Activated CD4-positive, alpha-beta T cell treated with anti-CD3 and anti-CD28 coated beads for 36 hours (primary cell): ENCODE measurements at regions of chr15 and their contacts with region 1.

Region 1: DNA sequence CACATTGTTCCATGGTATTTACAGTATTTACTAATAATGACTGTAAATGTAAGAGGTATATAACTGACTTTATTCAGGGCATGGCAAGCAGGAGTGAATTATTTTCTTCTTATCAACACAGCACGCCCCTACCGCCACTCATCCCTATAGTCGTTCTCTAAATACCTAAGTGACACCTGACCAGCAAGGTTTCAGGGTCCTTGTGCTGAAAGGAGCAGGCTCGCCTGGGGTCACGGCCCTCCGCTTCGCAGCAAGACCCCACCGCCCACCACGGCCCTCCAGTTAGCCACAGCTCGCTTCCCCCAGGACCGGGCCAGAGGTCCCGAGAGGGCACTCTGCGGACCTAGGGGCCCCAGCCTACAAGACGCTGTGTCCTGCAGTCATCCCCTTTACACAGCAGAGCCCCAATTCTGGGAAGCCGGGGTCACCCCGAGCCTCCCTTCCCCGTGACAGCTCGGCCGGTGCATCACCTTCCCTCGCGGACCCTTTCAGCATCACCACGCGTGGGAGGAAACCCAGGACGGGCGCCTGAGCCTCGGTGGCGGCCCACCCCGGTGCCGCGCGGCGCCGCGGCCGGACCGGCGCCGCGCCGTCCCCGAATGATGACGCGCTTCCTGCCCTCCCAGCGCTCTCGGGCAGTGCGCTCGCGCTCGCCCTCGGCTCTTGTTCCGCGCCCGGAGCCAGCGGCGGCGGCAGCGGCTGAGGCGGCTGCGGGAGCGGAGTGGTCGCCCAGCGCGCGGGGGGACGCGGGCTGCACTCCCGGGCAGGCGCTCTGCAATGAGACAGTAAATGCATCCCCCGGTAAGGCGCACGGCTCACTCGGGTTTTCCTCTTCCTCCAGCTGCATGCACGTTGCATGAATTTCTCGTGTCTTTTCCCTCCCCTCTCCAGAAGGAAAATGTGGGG is 225.1 kb upstream of the C2CD4B start:
- DNase-seq: peak; percentile 80
- ATAC-seq: peak; percentile 86
- H3K4me3 Mint-ChIP-seq: peak within 1 kb of the TSS; percentile 88
- H3K27ac Mint-ChIP-seq: peak within 1 kb of the TSS; percentile 84
- H3K4me1 Mint-ChIP-seq: peaks cover 15% of the 10 kb centered on the region
- H3K27me3 Mint-ChIP-seq: peaks cover 17% of the 10 kb centered on the region

Region 2: DNA sequence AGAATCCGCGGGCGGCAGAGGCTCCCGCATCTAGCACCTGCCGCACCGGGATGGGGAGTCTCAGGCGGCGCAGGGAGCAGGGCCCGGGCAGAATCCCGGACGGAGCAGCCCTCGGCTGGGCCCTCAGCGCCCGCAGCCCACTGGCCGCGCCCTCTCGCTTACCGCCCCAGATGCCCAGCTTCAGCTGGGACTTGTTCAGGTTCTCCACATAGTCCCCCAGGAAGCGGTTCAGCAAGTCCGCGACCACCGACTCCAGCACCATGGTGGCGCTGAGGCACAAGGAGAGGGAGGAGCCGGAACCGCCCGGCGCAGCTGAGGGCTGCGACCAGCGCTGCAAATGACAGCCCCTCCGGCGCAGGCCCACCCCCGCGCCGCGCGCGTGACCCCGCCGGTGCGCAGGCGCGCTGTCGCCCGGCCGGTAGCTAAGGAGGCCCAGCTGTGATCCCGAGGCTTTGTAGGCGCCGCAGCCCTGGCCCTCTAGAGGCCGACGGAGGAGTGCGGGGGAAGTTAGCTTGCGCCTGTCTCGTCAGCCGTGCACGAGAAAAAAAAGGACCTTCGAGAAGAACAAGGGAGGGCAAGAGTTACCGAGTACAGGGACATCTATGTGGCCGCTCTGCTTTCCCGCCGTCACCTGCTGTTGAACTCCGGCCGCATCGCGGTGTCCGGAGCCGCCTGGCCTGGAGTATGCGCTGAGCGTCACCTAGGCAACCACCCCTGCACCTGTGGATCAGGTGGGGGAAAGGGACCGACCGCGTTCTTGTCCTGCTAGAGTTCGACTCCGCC is 329.8 kb before region 1 on chr15 and contains the start of gene VPS13C:
- CTCF ChIA-PET with region 1: no interaction called
- POLR2A ChIA-PET with region 1: no interaction called
- intact Hi-C with region 1: loop called in 1 of 2 experiments (anchors 2 kb)
- DNase-seq: peak; percentile 94
- ATAC-seq: peak; percentile 90
- H3K4me3 Mint-ChIP-seq: peak within 1 kb of the TSS; percentile 95
- H3K27ac Mint-ChIP-seq: peak within 1 kb of the TSS; percentile 93
- H3K4me1 Mint-ChIP-seq: peaks cover 43% of the 10 kb centered on the region
- H3K27me3 Mint-ChIP-seq: peaks cover 1% of the 10 kb centered on the region
- total RNA-seq, gene VPS13C: 40.1 to 47.2 TPM

Region 3: DNA sequence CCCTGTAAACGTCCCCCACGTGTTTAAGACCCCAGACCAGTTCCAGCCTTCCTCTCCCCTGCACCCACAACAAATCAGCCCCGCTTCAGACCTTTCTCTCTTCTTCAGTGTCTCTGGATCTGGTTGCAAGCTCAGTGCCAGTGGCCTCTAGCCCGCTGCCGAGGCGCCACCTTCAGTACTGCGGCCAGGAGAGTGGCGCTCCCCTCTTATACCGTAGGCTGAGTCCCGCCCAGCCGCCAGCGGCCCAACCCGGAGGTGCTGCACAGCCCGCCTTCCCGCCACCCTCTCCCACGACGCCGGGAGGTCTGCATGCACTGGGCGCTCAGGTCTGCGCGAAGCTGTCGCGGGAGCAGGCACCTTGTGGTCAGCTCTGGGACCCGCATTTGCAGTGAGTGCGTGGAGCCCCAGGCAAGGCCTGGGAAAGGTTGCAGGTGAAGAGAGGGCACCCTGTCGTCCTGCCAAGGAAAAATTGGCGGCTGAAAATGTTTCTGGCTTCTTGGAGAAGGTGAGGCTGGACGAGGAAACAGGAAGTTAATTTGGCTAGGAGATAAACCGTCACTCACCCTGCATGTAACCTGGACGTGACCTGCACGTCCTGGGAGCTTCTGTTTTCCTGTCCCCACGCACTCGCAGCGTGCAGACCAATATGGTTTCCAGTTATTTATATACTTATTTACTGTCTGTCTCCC is 224.9 kb before region 1 on chr15 and contains the start of gene C2CD4B:
- CTCF ChIA-PET with region 1: no interaction called
- POLR2A ChIA-PET with region 1: no interaction called
- intact Hi-C with region 1: loop called in 1 of 2 experiments (anchors 5 kb)
- DNase-seq: peak; percentile 60
- ATAC-seq: peak; percentile 83
- H3K4me3 Mint-ChIP-seq: peak within 1 kb of the TSS; percentile 69
- H3K27ac Mint-ChIP-seq: no peak within 1 kb of the TSS
- H3K4me1 Mint-ChIP-seq: peaks cover 15% of the 10 kb centered on the region
- H3K27me3 Mint-ChIP-seq: peaks cover 48% of the 10 kb centered on the region
- total RNA-seq, gene C2CD4B: 0.19 to 0.37 TPM

Region 4: GRCh38 chr15:62344806-62345539 is 45.2 kb before region 1 on chr15:
- CTCF ChIA-PET with region 1: interaction called, 3 read pairs
- POLR2A ChIA-PET with region 1: no interaction called
- intact Hi-C with region 1: loop called in 1 of 2 experiments (anchors 2 kb)
- DNase-seq: peak; percentile 83
- ATAC-seq: peak; percentile 99
- H3K4me3 Mint-ChIP-seq: peak overlapping the region; percentile 56
- H3K27ac Mint-ChIP-seq: peak overlapping the region; percentile 88
- H3K4me1 Mint-ChIP-seq: peaks cover 6% of the 10 kb centered on the region
- H3K27me3 Mint-ChIP-seq: no peaks in the 10 kb centered on the region

Region 5: GRCh38 chr15:62357431-62357830 is 32.7 kb before region 1 on chr15:
- CTCF ChIA-PET with region 1: no interaction called
- POLR2A ChIA-PET with region 1: no interaction called
- intact Hi-C with region 1: no loop called
- DNase-seq: no peak
- ATAC-seq: no peak
- H3K4me3 Mint-ChIP-seq: no peak overlapping the region
- H3K27ac Mint-ChIP-seq: no peak overlapping the region
- H3K4me1 Mint-ChIP-seq: no peaks in the 10 kb centered on the region
- H3K27me3 Mint-ChIP-seq: peaks cover 22% of the 10 kb centered on the region

Region 6: DNA sequence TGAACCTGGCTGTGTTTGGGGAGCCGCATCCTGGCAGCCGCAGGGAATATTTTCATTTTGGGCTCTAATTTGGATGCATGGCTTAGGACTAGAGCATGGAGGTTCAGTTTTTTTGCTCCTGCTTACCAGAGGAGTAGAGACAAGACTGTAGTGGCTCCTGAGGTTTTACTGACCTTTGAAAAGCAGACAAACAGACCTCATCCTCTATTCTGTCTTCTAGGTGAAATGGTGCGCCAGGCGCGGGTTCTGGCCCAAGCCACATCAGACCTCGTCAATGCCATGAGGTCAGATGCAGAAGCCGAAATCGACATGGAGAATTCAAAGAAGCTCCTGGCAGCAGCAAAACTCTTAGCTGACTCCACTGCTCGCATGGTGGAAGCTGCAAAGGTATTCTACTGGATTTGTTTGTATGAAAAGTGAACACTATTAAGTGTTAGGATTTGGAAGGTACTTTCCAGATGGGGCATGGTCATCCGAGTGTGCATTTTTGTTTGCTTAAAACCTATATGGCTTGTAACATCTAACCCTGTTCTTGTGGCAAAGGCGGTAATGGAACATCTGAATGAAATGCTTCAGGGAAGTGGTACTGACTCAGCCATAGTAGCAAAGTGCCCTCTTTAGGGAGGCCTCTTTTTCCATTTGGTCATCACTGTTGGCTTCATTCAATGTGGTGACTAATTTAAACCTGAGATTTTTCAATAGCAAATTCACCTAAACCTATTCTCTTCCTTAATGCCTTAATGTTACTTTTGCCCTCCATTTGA is 321.7 kb after region 1 on chr15:
- CTCF ChIA-PET with region 1: no interaction called
- POLR2A ChIA-PET with region 1: no interaction called
- intact Hi-C with region 1: loop called in 1 of 2 experiments (anchors 10 kb)
- DNase-seq: peak; percentile 50
- ATAC-seq: peak; percentile 98
- H3K4me3 Mint-ChIP-seq: no peak overlapping the region
- H3K27ac Mint-ChIP-seq: peak overlapping the region; percentile 69
- H3K4me1 Mint-ChIP-seq: peaks cover 14% of the 10 kb centered on the region
- H3K27me3 Mint-ChIP-seq: peaks cover 5% of the 10 kb centered on the region

Region 7: GRCh38 chr15:62732078-62732477 is 341.9 kb after region 1 on chr15:
- CTCF ChIA-PET with region 1: no interaction called
- POLR2A ChIA-PET with region 1: no interaction called
- intact Hi-C with region 1: no loop called
- DNase-seq: no peak
- ATAC-seq: no peak
- H3K4me3 Mint-ChIP-seq: no peak overlapping the region
- H3K27ac Mint-ChIP-seq: no peak overlapping the region
- H3K4me1 Mint-ChIP-seq: no peaks in the 10 kb centered on the region
- H3K27me3 Mint-ChIP-seq: peaks cover 22% of the 10 kb centered on the region

Region 8: DNA sequence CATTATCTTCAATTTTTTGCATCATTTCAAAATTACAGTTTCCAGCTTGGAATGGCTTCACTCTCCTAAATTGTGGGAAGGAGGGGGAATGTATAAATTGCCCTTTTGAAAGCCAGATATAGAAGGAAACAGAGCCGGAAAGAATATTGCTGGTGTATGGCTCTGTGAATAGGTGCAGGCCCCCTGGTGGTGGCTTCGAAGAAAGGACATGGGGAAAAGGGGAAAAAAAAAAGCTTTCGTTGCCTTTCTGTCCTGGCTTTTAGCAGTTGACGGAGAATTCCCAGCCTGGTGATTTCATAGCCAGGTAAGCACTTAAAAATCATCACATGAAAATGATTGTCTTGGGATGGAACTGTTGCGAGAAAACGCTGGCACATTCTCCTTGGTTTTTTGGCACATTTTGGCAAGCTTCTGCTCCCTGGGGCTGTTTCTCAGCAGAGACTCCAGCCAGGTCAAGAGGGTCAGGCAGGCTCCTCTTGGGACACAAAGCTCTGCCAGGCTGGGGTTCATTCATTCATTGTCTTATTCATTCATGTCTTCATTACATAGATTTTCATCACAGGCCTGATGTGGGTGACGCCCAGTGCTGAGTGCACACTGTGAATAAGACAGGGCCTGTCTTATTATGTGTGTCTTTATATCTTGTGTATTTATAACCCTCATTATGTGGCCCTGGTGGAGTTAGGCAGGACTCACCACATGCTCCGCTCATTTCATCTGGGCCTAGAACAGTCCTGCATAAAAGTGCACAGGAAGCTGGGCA is 352.5 kb after region 1 on chr15:
- CTCF ChIA-PET with region 1: interaction called, 4 read pairs
- POLR2A ChIA-PET with region 1: no interaction called
- intact Hi-C with region 1: loop called in 1 of 2 experiments (anchors 2 kb)
- DNase-seq: peak; percentile 67
- ATAC-seq: peak; percentile 55
- H3K4me3 Mint-ChIP-seq: no peak overlapping the region
- H3K27ac Mint-ChIP-seq: no peak overlapping the region
- H3K4me1 Mint-ChIP-seq: peaks cover 7% of the 10 kb centered on the region
- H3K27me3 Mint-ChIP-seq: no peaks in the 10 kb centered on the region